ENCODE measurements at regions of chr19 and their contacts with region 1.

Region 1: DNA sequence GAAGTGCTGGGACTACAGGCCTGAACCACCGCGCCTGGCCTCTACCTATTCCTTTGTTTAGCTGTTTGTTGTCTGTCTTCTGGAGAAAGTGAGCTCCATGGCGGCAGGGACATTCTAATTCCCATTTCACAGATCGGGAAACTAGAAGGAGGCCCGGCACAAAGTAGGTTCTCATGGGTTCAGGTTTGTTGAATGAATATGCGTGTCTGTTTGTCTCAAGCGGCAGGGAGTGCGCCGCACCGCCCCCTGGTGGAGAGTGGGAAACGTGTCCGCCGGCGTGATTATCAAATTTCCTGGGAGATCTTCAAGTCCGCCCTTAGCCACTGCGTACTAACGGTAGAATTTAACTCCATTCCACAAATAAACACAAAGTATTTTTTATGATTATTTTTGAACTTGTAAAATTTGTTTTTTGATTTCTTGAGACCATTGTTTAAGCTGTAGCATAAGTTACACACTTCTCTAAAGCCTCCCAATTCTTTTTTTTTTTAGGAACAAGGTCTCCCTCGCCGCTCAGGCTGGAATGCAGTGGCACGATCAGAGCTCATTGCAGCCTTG is 8.9 kb upstream of the CCDC9 start:
- DNase-seq: peak; percentile 90
- ATAC-seq: peak; percentile 49
- H3K4me3 ChIP-seq: no peak overlapping the region
- H3K27ac ChIP-seq: no peak overlapping the region
- H3K4me1 ChIP-seq: peaks cover 9% of the 10 kb centered on the region
- H3K27me3 ChIP-seq: no peaks in the 10 kb centered on the region
- CTCF ChIP-seq: peak; percentile 96

Region 2: DNA sequence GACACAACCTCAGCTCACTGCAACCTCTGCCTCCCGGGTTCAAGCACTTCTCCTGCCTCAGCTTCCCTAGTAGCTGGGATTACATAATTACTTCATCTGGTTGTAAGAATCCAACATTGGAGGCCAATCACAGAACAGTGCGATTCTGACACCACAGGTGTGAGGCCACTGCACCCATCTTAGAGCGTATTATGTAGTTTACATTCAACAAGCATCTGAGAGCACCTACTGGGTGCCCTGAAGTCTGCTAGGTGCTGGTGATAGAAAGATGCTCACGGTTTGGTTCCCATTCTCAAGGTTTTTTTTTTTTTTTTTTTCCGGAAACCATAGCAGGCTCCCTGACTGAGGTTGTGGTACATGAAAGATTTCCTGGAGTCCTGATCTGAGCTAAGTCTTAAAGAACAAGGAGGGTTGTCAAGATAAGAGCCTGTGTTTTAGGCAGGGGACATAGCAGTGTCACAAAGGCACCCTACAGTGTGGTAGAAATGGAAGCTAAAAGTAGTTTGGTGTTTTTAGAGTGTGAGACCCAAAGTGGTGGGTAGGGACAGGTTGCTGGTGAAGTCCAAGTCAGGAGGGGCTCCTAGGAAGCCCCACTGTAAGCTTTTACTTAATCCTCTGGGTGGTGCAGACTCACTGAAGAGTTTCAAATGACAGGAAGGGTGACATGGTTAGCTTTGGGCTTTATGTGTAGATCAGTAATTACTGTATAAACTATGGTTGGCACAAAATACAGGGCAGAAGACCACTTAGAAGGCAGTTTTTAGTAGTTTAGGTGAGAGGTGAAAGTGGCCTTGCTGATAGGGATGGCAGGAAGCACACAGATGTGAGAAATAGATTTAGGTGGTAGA is 101.5 kb before region 1 on chr19:
- intact Hi-C with region 1: loop called (anchors 5 kb)
- DNase-seq: no peak
- ATAC-seq: no peak
- H3K4me3 ChIP-seq: no peak overlapping the region
- H3K27ac ChIP-seq: no peak overlapping the region
- H3K4me1 ChIP-seq: no peaks in the 10 kb centered on the region
- H3K27me3 ChIP-seq: no peaks in the 10 kb centered on the region
- CTCF ChIP-seq: no peak